ENCODE measurements at regions of chr4 and their contacts with region 1.

Region 1: DNA sequence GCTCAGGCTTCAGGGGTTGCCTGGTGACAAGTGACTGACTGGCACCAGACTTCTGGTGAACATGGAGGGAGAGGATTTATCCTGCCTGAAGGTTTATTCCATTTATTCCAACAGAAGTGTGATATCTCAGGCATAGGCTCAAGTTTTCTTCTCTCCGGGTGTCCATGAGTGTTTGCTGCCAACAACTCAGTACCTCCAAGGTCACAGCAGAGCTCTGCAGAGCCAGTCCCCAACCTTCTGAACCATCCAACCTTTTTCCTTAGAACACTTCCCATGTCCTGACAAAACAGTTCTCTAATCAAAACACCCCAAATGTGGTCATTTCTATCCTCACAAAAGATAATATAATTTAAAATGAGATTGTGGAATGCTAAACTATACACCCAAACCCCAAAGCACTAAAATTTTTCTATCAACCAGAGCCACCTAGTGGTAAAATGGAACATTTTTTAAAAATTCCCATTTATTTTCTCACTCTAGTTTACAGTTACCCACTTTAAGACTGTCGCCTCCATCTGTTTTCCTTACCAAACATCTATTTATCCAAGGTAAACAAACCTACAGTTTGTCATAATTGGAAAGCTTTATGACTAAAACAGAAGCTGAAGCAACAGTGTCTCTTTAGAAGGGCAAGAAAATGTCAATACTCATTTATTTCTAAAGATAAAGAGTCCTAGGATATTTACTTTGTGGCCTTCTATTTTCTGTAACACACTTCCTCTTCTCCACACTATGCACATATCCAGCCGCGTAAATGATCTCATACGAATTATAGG is 39.6 kb downstream of the TMEM154 start:
- DNase-seq: peak; percentile 12 to 48 (median 38)
- ATAC-seq: peak; percentile 75
- H3K4me3 ChIP-seq: no peak overlapping the region
- H3K27ac ChIP-seq: no peak overlapping the region
- H3K4me1 ChIP-seq: peaks cover 0 to 4% of the 10 kb centered on the region in 2 experiments; a peak in 3 of 5 replicates
- H3K27me3 ChIP-seq: peaks cover 0 to 16% of the 10 kb centered on the region in 2 experiments; a peak in 2 of 5 replicates
- CTCF ChIP-seq: peak; percentile 34 to 79 (median 47); a peak in 5 of 6 replicates
- EP300 ChIP-seq: no peak
- POLR2A ChIP-seq: no peak
- RAD21 ChIP-seq: peak; percentile 76 to 79

Region 2: GRCh38 chr4:152408514-152409327 is 231.5 kb before region 1 on chr4:
- CTCF ChIA-PET with region 1: interaction called, 7 read pairs
- POLR2A ChIA-PET with region 1: no interaction called
- in situ Hi-C with region 1: no loop called
- intact Hi-C with region 1: loop called (anchors 1 kb)
- DNase-seq: peak; percentile 13 to 28 (median 18)
- ATAC-seq: peak; percentile 71
- H3K4me3 ChIP-seq: no peak overlapping the region
- H3K27ac ChIP-seq: no peak overlapping the region
- H3K4me1 ChIP-seq: no peaks in the 10 kb centered on the region
- H3K27me3 ChIP-seq: no peaks in the 10 kb centered on the region
- CTCF ChIP-seq: peak; percentile 29 to 68 (median 64); a peak in 5 of 6 replicates
- EP300 ChIP-seq: no peak
- POLR2A ChIP-seq: no peak
- RAD21 ChIP-seq: peak; percentile 61 to 63

Region 3: DNA sequence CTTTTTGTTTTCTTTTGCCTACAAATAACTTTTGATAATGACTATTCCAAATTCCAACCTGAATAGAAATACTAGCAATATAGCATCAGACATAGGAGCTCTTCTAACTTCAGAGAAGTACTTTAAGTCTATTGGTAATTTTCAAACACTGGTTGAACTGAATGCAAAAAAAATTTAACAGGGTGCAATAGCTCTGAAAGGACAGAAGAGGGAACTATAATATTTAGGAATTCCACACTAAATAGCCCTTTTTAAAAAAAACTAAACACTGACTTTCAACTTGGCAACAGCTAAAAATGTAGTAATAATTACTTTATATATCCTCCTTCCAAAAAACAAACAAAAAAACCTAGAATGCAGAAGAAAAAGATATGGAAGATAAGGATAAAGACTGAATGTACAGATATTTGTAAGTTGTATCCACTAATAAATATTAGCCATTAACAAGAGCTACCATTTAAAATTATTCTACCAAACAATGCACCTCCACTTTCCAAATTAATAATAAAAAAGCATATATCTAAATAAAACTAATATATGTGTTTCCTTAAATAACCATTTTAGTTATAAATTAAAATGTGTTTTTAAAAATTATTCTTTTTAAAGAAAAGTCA is 185.7 kb before region 1 on chr4:
- CTCF ChIA-PET with region 1: interaction called, 5 read pairs
- POLR2A ChIA-PET with region 1: no interaction called
- in situ Hi-C with region 1: no loop called
- intact Hi-C with region 1: loop called (anchors 1 kb)
- DNase-seq: peak in 2 of 4 experiments; percentile 6 to 17
- ATAC-seq: 0 out of 3 replicates have a peak, but pooled peaks have one; percentile 35
- H3K4me3 ChIP-seq: no peak overlapping the region
- H3K27ac ChIP-seq: no peak overlapping the region
- H3K4me1 ChIP-seq: no peaks in the 10 kb centered on the region; a peak in 1 of 5 replicates
- H3K27me3 ChIP-seq: no peaks in the 10 kb centered on the region
- CTCF ChIP-seq: peak; percentile 32 to 75 (median 37); a peak in 4 of 6 replicates
- EP300 ChIP-seq: no peak
- POLR2A ChIP-seq: no peak
- RAD21 ChIP-seq: peak; percentile 67 to 73

Region 4: GRCh38 chr4:152500800-152501434 is 139.3 kb before region 1 on chr4:
- CTCF ChIA-PET with region 1: interaction called, 39 read pairs
- POLR2A ChIA-PET with region 1: no interaction called
- in situ Hi-C with region 1: loop called (anchors 5 kb)
- intact Hi-C with region 1: loop called (anchors 1 kb)
- DNase-seq: peak; percentile 47 to 86 (median 56)
- ATAC-seq: peak; percentile 93
- H3K4me3 ChIP-seq: no peak overlapping the region
- H3K27ac ChIP-seq: no peak overlapping the region
- H3K4me1 ChIP-seq: peaks cover 0 to 8% of the 10 kb centered on the region in 2 experiments; a peak in 3 of 5 replicates
- H3K27me3 ChIP-seq: no peaks in the 10 kb centered on the region
- CTCF ChIP-seq: peak; percentile 44 to 82 (median 76)
- EP300 ChIP-seq: no peak
- POLR2A ChIP-seq: no peak
- RAD21 ChIP-seq: peak; percentile 80 to 86

Region 5: DNA sequence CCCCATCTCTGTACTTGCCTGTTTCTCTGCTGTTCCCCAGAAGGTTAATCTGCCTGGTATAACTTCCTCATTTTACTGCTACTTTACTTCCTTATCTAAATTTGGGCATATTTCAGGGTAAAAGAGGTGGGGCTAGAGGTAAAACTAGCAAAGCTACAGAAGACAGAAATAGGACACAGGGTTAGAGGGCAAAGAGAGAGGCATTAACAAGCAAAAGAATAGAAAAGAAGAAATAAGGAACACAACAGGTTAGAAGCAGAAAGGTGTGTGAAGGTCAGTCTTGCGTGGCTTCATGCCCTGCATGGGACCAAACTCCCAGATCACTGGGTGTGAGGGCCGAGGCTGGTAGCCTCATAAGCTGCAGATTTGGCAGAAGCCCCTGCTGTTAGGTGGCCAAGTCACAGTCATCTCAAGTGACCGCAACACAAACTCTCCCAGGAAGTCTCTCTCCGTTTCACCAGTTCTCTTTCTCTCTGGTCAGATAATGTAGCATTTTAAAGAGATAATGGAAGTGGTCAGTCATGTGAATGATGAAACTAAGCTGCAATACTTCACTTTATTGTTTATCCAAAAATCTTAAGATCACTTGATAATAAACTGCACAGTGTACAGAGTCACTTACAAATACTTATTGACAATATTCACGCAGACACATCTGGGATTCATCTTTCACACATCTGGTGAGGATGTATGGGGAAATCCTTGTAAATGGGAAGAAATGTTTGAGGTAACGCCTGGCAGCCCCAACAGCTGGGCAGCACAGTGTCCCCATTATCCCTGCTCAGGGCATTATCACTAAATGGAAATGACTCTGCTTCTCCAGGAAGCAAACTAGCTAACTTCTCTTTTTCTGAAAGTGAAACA is 23.2 kb after region 1 on chr4:
- CTCF ChIA-PET with region 1: no interaction called
- POLR2A ChIA-PET with region 1: no interaction called
- in situ Hi-C with region 1: no loop called
- intact Hi-C with region 1: loop called (anchors 1 kb)
- DNase-seq: peak in 1 of 4 experiments; percentile 9
- ATAC-seq: peak; percentile 76
- H3K4me3 ChIP-seq: no peak overlapping the region
- H3K27ac ChIP-seq: peak overlapping the region; percentile 6; the same call in 1 of the 3 replicates
- H3K4me1 ChIP-seq: peaks cover 0 to 19% of the 10 kb centered on the region in 2 experiments; a peak in 3 of 5 replicates
- H3K27me3 ChIP-seq: peaks cover 2 to 6% of the 10 kb centered on the region in 2 experiments; a peak in 3 of 5 replicates
- CTCF ChIP-seq: no peak
- EP300 ChIP-seq: peak; percentile 94
- POLR2A ChIP-seq: no peak
- RAD21 ChIP-seq: no peak; a peak in 1 of 4 replicates

Region 6: DNA sequence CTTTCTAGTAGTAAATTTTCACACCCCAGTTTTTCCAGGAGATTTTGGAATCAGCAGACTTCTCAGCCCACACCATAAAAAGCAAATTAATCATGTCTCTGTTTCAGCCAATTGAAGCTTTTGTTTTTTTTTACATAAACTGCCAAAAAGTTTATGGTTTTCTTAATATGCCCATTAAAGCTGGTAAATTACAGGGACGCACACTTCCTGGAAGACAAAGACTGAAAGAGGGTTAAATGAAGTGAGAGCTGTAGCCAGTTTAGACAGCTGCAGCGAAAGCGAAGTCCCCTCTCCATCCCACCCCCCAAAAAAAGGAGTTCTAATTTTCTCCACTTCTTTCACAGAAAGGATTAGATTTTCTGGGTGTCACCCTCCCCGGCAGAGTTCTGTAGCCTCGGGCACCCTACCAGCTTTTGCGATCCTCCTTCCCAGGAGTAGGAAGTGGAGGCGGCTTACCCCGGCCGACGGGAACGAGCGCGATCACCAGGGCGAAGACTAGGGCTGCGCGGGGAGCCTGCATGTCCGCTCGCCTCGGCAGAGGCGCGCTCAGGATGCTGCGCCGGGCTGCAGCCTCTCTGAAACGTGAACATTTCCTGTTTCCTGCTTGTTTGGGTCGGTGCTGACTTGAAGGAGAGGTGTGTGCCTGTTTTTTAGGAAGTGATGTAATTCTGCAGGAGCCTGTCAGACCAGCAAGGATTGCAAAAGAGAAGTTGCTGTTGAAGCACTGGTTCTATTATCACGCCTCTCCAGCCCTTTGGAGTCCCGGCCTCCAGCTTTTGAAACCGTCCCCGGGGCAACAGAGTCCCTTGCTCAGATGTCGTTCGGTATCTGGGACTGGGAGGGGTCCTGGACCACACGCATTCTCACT is 39.4 kb after region 1 on chr4 and contains the start of gene TMEM154:
- CTCF ChIA-PET with region 1: no interaction called
- POLR2A ChIA-PET with region 1: no interaction called
- in situ Hi-C with region 1: no loop called
- intact Hi-C with region 1: no loop called
- DNase-seq: peak in 1 of 4 experiments; percentile 12
- ATAC-seq: peak; percentile 80
- H3K4me3 ChIP-seq: peak within 1 kb of the TSS; percentile 6; the same call in 1 of the 2 replicates
- H3K27ac ChIP-seq: no peak within 1 kb of the TSS
- H3K4me1 ChIP-seq: peaks cover 0 to 4% of the 10 kb centered on the region in 2 experiments; a peak in 3 of 5 replicates
- H3K27me3 ChIP-seq: peaks cover 7 to 42% of the 10 kb centered on the region in 2 experiments
- CTCF ChIP-seq: no peak
- EP300 ChIP-seq: peak; percentile 4; the same call in 1 of the 2 replicates
- POLR2A ChIP-seq: no peak
- RAD21 ChIP-seq: no peak
- polyA plus RNA-seq, gene TMEM154: 0.38 to 0.73 TPM

Region 7: DNA sequence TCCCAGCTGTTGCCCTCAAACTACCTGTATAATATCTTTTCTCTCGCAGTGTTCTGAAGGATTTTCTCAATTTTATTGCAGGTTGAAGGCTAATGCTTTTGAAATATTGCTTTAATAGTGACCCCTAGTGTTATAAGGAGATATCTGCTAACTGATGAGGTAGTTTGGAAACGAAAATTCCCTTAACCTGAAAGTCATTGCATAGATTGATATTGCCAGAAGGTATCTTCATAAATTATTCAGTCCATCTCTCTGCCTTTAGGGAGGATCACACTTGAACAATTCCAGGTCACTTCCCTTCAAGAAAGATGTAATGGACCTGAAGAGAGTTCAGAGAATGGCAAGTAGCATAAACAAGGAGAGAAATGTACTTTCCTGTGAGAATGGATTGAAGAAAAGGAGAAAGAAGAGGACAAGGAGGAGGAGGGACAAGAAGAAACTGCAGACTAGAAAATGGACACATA is 95.2 kb after region 1 on chr4:
- CTCF ChIA-PET with region 1: no interaction called
- POLR2A ChIA-PET with region 1: no interaction called
- in situ Hi-C with region 1: no loop called
- intact Hi-C with region 1: loop called (anchors 5 kb)
- DNase-seq: peak in 3 of 4 experiments; percentile 10 to 12 (median 11)
- ATAC-seq: peak; percentile 67
- H3K4me3 ChIP-seq: no peak overlapping the region
- H3K27ac ChIP-seq: no peak overlapping the region
- H3K4me1 ChIP-seq: no peaks in the 10 kb centered on the region
- H3K27me3 ChIP-seq: peaks cover 5 to 13% of the 10 kb centered on the region in 2 experiments; a peak in 3 of 5 replicates
- CTCF ChIP-seq: peak; percentile 23 to 68 (median 37); a peak in 4 of 6 replicates
- EP300 ChIP-seq: no peak
- POLR2A ChIP-seq: no peak
- RAD21 ChIP-seq: peak; percentile 79 to 80

Region 8: DNA sequence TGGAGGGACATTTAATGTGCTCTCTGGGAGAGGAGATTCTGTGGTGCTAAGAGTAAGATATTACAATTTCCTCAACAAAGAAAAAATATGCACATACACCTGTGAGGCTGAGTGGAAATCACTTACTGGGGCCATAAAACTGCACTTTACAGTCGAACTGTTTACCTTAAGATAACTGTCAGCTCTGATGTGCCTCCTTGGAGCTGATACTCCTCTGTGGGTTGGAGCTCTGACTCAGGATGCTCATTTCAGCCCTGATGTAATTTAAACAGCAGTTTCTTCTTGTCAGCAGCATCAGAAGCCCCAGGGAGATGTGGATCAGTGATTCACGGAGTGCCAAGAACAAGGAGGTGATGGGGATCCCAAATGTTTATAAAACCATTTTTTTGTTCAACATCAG is 1390.5 kb after region 1 on chr4:
- CTCF ChIA-PET with region 1: no interaction called
- POLR2A ChIA-PET with region 1: no interaction called
- in situ Hi-C with region 1: no loop called
- intact Hi-C with region 1: no loop called
- DNase-seq: no peak
- ATAC-seq: no peak
- H3K4me3 ChIP-seq: no peak overlapping the region
- H3K27ac ChIP-seq: no peak overlapping the region
- H3K4me1 ChIP-seq: no peaks in the 10 kb centered on the region
- H3K27me3 ChIP-seq: no peaks in the 10 kb centered on the region
- CTCF ChIP-seq: no peak
- EP300 ChIP-seq: no peak
- POLR2A ChIP-seq: no peak
- RAD21 ChIP-seq: no peak

Measured in K562 (cell line).